Naive thymus-derived CD4-positive, alpha-beta T cell (primary cell): ENCODE measurements at regions of chr5 and their contacts with region 1.

Region 1: DNA sequence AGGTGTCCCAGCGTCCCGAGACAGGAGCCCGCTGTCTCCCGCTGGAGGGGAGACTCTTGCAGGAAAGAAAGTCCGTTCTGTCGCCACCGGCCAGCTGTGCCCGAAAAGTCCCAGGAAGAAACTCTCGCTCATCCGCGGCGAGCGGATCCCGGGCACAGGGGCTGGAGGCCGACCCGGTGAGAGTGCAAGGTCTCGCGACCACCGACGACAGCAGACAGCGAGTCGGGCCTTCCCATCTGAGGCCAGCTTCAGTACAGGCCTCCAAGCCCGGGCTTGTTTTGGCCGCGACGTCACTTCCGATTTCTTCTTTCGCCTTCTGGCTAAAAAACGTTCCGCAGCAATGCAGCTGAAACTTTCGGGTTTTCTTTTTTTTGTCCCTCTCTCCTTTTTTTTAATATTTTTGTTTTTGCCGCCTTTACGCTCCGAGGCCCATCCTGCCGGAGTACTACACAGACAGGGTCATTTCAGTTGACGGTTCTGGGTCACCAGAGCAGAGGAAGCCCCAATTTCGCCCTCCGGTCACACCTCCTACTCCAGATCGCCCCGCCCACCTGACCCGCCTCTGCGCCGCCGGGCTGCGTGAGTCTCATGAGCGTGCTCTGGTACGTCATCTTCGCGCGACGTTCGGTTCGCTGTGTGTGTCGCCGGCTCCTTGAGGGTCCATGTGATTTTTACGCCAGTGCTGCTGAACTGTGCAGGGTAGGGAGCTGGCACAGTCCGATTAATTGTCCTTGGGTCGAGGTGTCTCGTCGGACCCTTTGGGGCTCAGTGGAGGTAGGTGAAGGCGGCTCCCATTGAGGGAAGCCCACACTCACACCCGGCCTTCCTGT is at the starts of genes ANKRA2 and UTP15:
- DNase-seq: peak; percentile 95 to 99 (median 98)
- ATAC-seq: peak; percentile 99
- H3K4me3 ChIP-seq: peak within 1 kb of the TSS; percentile 71
- H3K4me3 Mint-ChIP-seq: peak within 1 kb of the TSS; percentile 91 to 100 (median 98)
- H3K27ac ChIP-seq: peak within 1 kb of the TSS; percentile 95
- H3K27ac Mint-ChIP-seq: peak within 1 kb of the TSS; percentile 96 to 100 (median 99)
- H3K4me1 ChIP-seq: peaks cover 11 to 26% of the 10 kb centered on the region in 2 donors
- H3K4me1 Mint-ChIP-seq: peaks cover 22 to 72% (median 53%) of the 10 kb centered on the region in 7 donors
- H3K27me3 ChIP-seq: no peaks in the 10 kb centered on the region
- H3K27me3 Mint-ChIP-seq: peaks cover 0 to 3% (median 0%) of the 10 kb centered on the region in 5 donors
- total RNA-seq, gene ANKRA2: 22.7 to 57.8 (median 41.5) TPM
- total RNA-seq, gene UTP15: 23.6 to 46.5 (median 25.2) TPM

Region 2: GRCh38 chr5:71586941-71587765 is 1978.2 kb before region 1 on chr5 and contains the start of gene MCCC2:
- CTCF ChIA-PET with region 1: no interaction called
- POLR2A ChIA-PET with region 1: no interaction called
- intact Hi-C with region 1: loop called in 1 of 2 experiments (anchors 10 kb)
- DNase-seq: peak; percentile 91 to 95 (median 95)
- ATAC-seq: peak; percentile 99
- H3K4me3 ChIP-seq: peak within 1 kb of the TSS; percentile 98
- H3K4me3 Mint-ChIP-seq: peak within 1 kb of the TSS; percentile 87 to 99 (median 94)
- H3K27ac ChIP-seq: peak within 1 kb of the TSS; percentile 87
- H3K27ac Mint-ChIP-seq: peak within 1 kb of the TSS; percentile 85 to 99 (median 97)
- H3K4me1 ChIP-seq: peaks cover 16 to 34% of the 10 kb centered on the region in 2 donors
- H3K4me1 Mint-ChIP-seq: peaks cover 26 to 49% (median 36%) of the 10 kb centered on the region in 7 donors
- H3K27me3 ChIP-seq: no peaks in the 10 kb centered on the region
- H3K27me3 Mint-ChIP-seq: no peaks in the 10 kb centered on the region
- total RNA-seq, gene MCCC2: 22.4 to 41.0 (median 29.8) TPM

Region 3: DNA sequence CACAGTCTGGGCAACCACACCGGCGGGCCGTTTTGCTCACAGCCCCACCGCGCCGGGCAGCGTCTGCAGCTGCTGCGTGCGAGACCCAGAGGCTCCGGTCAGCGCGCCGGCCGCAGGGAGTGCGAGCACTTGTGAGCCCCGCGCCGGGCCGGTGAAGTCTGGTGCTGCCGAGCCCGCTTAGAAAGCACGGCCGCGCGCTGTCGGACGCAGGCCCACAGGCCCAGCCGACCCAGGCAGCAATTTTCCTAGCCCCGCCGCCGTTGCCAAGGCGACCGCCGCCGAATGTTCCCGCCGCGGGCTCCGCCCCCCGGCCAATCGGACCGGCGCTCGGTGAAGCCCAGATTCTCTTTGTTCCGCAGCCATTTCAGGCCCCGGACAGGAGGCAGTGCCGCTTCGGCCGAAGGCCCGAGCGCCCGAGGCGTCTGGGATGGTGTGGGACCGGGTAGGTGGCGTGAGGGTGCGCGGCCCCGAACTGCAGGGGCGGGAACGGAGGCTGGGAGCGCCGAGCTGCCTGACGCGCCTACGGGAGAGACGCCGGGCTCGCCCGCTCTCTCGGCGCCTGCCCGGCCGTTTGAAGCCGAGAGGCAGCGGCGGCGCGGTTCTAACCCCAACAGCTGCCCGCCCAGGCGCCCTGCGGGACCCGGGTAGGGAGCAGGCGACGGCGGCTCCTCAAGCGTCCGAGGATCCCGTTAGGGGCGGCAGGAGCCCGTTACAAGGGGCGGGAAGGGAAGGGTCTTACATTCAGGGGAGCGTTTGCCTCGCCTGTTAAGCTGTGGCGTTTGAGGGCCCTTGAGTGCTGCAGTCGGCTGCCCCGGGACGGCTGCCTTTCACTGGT is 748.8 kb before region 1 on chr5 and contains the start of gene TNPO1:
- CTCF ChIA-PET with region 1: no interaction called
- POLR2A ChIA-PET with region 1: no interaction called
- intact Hi-C with region 1: loop called in 1 of 2 experiments (anchors 1 kb)
- DNase-seq: peak; percentile 75 to 89 (median 84)
- ATAC-seq: peak; percentile 87
- H3K4me3 ChIP-seq: peak within 1 kb of the TSS; percentile 83
- H3K4me3 Mint-ChIP-seq: peak within 1 kb of the TSS; percentile 90 to 100 (median 98)
- H3K27ac ChIP-seq: peak within 1 kb of the TSS; percentile 93
- H3K27ac Mint-ChIP-seq: peak within 1 kb of the TSS; percentile 81 to 98 (median 94)
- H3K4me1 ChIP-seq: peaks cover 6 to 21% of the 10 kb centered on the region in 2 donors
- H3K4me1 Mint-ChIP-seq: peaks cover 14 to 32% (median 23%) of the 10 kb centered on the region in 7 donors
- H3K27me3 ChIP-seq: no peaks in the 10 kb centered on the region
- H3K27me3 Mint-ChIP-seq: peaks cover 8 to 30% (median 20%) of the 10 kb centered on the region in 5 donors
- total RNA-seq, gene TNPO1: 52.8 to 96.3 (median 82.1) TPM

Region 4: DNA sequence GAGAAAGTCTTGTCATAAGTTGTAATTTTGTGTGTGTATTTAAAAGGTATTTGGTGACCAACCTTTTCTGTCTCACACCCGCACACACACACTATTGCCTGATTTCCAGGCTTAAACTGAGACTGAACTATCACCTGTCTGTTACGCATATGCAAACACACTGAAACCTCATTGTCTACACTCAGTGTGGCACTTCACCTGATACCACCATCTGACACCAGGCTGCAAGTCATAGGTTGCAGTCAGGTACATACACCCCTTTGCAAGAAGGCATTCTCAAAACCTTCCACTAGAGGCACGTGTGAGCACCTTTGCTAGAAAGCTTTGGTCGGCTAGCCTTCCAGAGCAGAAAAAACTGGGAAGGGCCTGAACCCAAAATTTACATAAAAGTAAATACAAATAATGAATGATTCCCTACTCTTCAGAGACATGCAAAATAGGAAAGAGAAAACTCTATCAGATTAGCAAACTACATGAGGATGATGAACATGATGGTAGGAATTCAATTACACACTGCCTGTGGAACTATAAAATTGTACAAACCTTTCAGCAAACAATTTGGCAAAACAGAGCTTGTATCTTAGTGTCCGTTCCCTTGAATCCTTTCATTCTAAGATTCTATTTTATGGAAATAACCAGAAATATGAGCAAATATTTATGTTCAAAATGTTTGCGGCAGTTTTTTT is 110.9 kb before region 1 on chr5:
- CTCF ChIA-PET with region 1: no interaction called
- POLR2A ChIA-PET with region 1: no interaction called
- intact Hi-C with region 1: loop called in 1 of 2 experiments (anchors 5 kb)
- DNase-seq: peak in 4 of 9 donors; percentile 42 to 49 (median 45)
- ATAC-seq: peak; percentile 86
- H3K4me3 ChIP-seq: no peak overlapping the region
- H3K4me3 Mint-ChIP-seq: no peak overlapping the region
- H3K27ac ChIP-seq: no peak overlapping the region
- H3K27ac Mint-ChIP-seq: no peak overlapping the region
- H3K4me1 ChIP-seq: peaks cover 0 to 4% of the 10 kb centered on the region in 2 donors
- H3K4me1 Mint-ChIP-seq: peaks cover 2 to 12% (median 7%) of the 10 kb centered on the region in 7 donors
- H3K27me3 ChIP-seq: peaks cover 35 to 49% of the 10 kb centered on the region in 2 donors
- H3K27me3 Mint-ChIP-seq: peaks cover 75 to 84% (median 80%) of the 10 kb centered on the region in 5 donors

Region 5: DNA sequence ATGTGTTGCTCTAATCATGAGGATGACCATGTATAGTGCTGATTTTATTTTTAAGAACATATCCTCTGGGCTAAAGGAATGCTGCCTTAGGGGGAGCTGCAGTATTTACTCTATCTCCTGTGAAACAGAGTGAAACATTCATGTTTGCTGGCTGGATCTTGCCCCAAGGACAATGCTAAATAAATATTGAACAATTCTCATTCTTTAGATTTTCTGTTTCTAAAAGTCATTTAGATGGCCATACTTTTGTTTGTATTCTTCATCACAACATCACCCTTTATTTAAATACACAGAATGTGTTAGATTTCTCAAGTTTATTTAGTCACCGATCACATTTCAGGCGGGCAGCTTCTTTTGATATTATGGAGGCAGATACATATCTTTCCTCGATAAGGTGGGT is 164.0 kb after region 1 on chr5:
- CTCF ChIA-PET with region 1: no interaction called
- POLR2A ChIA-PET with region 1: no interaction called
- intact Hi-C with region 1: no loop called
- DNase-seq: no peak
- ATAC-seq: no peak
- H3K4me3 ChIP-seq: no peak overlapping the region
- H3K4me3 Mint-ChIP-seq: no peak overlapping the region
- H3K27ac ChIP-seq: no peak overlapping the region
- H3K27ac Mint-ChIP-seq: no peak overlapping the region
- H3K4me1 ChIP-seq: no peaks in the 10 kb centered on the region
- H3K4me1 Mint-ChIP-seq: no peaks in the 10 kb centered on the region
- H3K27me3 ChIP-seq: no peaks in the 10 kb centered on the region
- H3K27me3 Mint-ChIP-seq: peaks cover 15 to 31% (median 19%) of the 10 kb centered on the region in 5 donors

Region 6: DNA sequence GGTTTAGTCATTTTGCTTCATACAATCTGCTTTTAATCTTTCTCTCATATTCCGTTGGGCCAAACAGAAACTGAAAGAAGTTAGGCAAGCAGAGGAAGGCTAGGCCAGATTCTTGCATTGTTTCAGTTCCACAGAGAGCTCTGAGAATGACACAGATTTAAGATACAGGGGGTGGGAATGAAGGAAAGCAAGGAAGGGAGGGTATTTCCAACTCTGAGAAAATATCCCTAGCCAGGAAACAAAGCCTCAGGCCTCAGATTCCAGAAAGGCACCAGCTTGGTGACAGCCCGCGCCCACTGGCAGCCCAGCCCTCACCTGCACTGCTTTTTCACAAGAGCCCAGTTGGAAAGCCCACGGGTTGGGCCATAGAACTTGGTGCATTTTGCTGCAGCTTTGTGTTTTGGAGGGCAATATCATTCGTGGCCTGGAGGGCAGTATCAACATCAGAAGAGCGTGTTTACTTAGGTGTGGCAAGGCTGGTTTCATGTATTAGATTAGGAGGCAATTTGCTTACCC is 1011.6 kb after region 1 on chr5:
- CTCF ChIA-PET with region 1: no interaction called
- POLR2A ChIA-PET with region 1: no interaction called
- intact Hi-C with region 1: loop called in 1 of 2 experiments (anchors 5 kb)
- DNase-seq: peak in 7 of 9 donors; percentile 6 to 43 (median 24)
- ATAC-seq: peak; percentile 41
- H3K4me3 ChIP-seq: peak overlapping the region; percentile 48
- H3K4me3 Mint-ChIP-seq: peak overlapping the region; percentile 41 to 92 (median 71)
- H3K27ac ChIP-seq: peak overlapping the region; percentile 8
- H3K27ac Mint-ChIP-seq: peak overlapping the region; percentile 51 to 97 (median 81)
- H3K4me1 ChIP-seq: peaks cover 21 to 22% of the 10 kb centered on the region in 2 donors
- H3K4me1 Mint-ChIP-seq: peaks cover 10 to 51% (median 30%) of the 10 kb centered on the region in 7 donors
- H3K27me3 ChIP-seq: no peaks in the 10 kb centered on the region
- H3K27me3 Mint-ChIP-seq: peaks cover 0 to 12% (median 0%) of the 10 kb centered on the region in 5 donors

Region 7: GRCh38 chr5:74766849-74767578 is 1201.7 kb after region 1 on chr5 and contains the starts of genes GFM2 and NSA2:
- CTCF ChIA-PET with region 1: no interaction called
- POLR2A ChIA-PET with region 1: no interaction called
- intact Hi-C with region 1: loop called (anchors 1 to 2 kb)
- DNase-seq: peak; percentile 77 to 94 (median 92)
- ATAC-seq: peak; percentile 97
- H3K4me3 ChIP-seq: peak within 1 kb of the TSS; percentile 98
- H3K4me3 Mint-ChIP-seq: peak within 1 kb of the TSS; percentile 97 to 100 (median 99)
- H3K27ac ChIP-seq: peak within 1 kb of the TSS; percentile 81
- H3K27ac Mint-ChIP-seq: peak within 1 kb of the TSS; percentile 95 to 99 (median 98)
- H3K4me1 ChIP-seq: peaks cover 22% of the 10 kb centered on the region in 2 donors
- H3K4me1 Mint-ChIP-seq: peaks cover 12 to 57% (median 40%) of the 10 kb centered on the region in 7 donors
- H3K27me3 ChIP-seq: no peaks in the 10 kb centered on the region
- H3K27me3 Mint-ChIP-seq: no peaks in the 10 kb centered on the region
- total RNA-seq, gene GFM2: 17.8 to 30.2 (median 20.5) TPM
- total RNA-seq, gene NSA2: 70.9 to 153 (median 126) TPM

Region 8: DNA sequence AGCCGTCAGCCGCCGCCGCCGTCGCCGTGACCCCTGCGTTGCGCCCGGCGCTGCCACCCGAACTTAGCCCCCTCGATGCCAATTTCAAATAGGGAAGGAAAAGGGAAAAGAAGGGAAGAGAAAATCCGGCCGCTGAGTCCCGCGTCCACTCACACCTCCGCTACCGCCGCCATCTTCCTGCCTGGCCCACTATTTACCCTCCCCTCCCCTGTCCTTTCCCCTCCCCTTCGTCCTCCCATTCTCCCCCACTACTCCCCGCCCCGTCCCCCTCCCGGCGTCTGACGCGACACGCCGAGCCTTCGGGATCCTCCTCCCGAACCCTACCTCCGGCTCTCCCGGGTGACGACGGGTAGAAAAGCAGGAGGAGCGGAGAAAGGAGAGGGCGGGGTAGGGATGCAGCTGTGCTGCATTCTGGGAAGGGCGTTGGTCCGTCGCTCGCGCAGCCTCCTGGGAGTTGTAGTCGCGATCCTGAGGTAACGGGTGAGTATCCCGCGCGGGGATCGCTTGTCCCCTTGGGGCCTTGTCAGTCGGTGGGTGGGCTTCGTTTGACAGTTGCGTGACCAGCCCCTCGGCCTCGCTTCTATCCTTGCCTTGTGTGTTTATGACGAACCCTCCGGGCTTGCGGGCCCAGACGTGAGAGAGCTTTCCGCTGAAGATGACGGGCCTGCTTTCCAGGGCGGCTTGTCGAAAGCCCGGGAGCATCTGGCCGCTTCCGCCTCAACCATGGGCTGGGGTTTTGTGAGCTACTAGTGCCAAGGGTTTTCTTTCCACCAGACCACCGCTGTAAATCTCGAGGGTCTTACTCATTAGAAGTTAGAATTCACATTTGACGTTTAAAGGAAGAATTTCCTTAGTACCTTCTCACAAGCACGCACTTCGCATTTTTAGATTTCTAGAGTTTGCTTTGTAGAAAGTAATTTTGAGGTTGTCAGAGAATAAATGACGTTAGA is 1946.4 kb after region 1 on chr5 and contains the starts of genes CERT1 and POLK:
- CTCF ChIA-PET with region 1: no interaction called
- POLR2A ChIA-PET with region 1: no interaction called
- intact Hi-C with region 1: loop called in 1 of 2 experiments (anchors 1 kb)
- DNase-seq: peak; percentile 70 to 94 (median 90)
- ATAC-seq: peak; percentile 95
- H3K4me3 ChIP-seq: peak within 1 kb of the TSS; percentile 78
- H3K4me3 Mint-ChIP-seq: peak within 1 kb of the TSS; percentile 89 to 97 (median 94)
- H3K27ac ChIP-seq: peak within 1 kb of the TSS; percentile 75
- H3K27ac Mint-ChIP-seq: peak within 1 kb of the TSS; percentile 84 to 98 (median 93)
- H3K4me1 ChIP-seq: peaks cover 14 to 28% of the 10 kb centered on the region in 2 donors
- H3K4me1 Mint-ChIP-seq: peaks cover 29 to 77% (median 54%) of the 10 kb centered on the region in 7 donors
- H3K27me3 ChIP-seq: no peaks in the 10 kb centered on the region
- H3K27me3 Mint-ChIP-seq: no peaks in the 10 kb centered on the region
- total RNA-seq, gene CERT1: 34.4 to 60.4 (median 39.3) TPM
- total RNA-seq, gene POLK: 20.6 to 36.6 (median 24.9) TPM